ENCODE measurements at regions of chr5 and their contacts with region 1.

Region 1: DNA sequence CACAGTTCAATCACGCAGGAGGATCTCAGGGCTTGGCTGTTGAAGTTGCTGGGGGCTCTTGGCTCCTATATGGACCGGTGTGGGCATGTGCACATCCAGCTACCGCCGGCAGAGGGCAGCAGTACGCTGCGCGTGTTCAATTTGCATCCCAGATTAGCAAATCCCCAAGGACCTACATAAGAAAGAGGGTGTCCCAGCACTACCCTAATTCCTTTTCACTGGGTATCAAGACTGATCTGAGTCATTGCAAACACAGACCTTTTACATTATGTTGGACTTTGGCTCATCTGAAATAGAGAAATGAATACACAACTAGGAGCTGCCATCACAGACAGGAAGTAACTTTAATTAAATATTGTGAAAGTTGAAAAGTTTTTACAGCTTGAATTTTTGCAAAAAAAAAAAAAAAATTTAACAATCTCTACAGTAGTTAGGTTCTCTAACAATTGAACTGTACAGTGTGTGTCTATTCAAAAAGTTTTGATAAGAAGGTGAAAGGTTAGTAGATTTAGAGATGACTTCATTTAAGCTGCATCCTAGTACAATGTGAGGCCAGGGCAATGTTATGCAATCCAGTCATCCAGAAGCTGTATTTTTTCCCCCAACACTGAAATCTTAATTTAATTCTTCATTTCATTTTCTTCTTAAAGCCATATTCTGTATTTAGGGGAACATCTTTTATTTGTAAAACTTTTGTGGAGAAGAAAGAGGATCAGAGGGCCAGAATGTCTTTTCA is 404.0 kb downstream of the EBF1 start:
- H3K4me3 ChIP-seq: no peak overlapping the region
- H3K27ac ChIP-seq: no peak overlapping the region
- H3K4me1 ChIP-seq: peaks cover 14% of the 10 kb centered on the region
- CTCF ChIP-seq: peak; percentile 76

Region 2: DNA sequence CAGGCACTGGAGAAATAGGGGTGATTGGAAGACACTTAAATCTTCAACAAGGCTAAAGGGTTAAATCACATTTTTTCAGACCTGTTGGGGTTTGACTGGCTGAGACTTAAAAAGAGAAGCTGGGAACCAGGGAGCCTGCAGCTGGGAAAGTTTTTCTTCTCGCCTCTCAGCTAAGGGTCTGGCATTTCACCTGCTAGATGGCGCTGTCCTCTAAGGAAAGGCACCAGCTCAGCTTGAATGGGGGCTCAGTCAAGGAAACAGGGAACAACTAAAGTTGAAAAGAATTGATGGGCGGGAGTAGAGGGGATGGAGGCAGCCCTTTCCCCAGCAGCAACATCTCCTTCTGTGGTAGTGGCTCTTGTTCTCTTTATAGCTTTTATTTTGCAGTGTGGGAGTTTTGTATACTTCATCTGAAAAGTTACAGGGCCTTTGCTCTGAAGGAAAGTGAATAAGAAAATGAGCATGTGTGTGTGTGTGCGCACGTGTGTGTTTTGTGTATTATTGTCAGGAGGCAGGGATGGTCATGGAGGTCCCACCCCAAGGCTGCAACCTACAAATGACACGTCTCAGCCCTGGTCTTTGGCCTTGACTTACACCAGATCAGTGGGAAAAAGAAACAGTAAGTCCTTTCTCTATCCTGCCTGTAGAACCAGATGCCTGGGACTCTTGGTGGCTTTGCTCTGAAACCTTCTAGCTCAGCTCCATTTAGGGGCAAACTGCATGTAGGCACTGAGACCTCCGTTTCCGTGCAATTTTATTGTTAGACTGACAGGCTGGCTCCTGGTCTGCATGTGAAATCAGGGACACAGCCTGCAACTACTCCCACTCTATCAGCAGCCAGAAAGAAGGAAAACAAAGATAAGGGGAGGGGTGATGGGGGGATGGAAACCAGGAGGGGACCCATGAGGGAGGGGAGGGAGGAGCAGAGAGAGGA is 520.6 kb before region 1 on chr5:
- CTCF ChIA-PET with region 1: interaction called, 11 read pairs
- POLR2A ChIA-PET with region 1: no interaction called
- H3K4me3 ChIP-seq: no peak overlapping the region
- H3K27ac ChIP-seq: peak overlapping the region; percentile 83; the same call in 1 of the 2 replicates
- H3K4me1 ChIP-seq: peaks cover 15% of the 10 kb centered on the region
- CTCF ChIP-seq: peak; percentile 80; the same call in 1 of the 2 replicates

Region 3: GRCh38 chr5:158682631-158683030 is 13.1 kb before region 1 on chr5:
- CTCF ChIA-PET with region 1: interaction called, 18 read pairs
- POLR2A ChIA-PET with region 1: no interaction called
- H3K4me3 ChIP-seq: no peak overlapping the region
- H3K27ac ChIP-seq: no peak overlapping the region
- H3K4me1 ChIP-seq: no peaks in the 10 kb centered on the region
- CTCF ChIP-seq: no peak

Region 4: GRCh38 chr5:158709279-158709678 is 13.5 kb after region 1 on chr5:
- CTCF ChIA-PET with region 1: interaction called, 24 read pairs
- POLR2A ChIA-PET with region 1: interaction called, 4 read pairs
- H3K4me3 ChIP-seq: no peak overlapping the region
- H3K27ac ChIP-seq: no peak overlapping the region
- H3K4me1 ChIP-seq: no peaks in the 10 kb centered on the region
- CTCF ChIP-seq: no peak

Region 5: GRCh38 chr5:158770506-158770905 is 74.7 kb after region 1 on chr5:
- CTCF ChIA-PET with region 1: interaction called, 18 read pairs
- POLR2A ChIA-PET with region 1: no interaction called
- H3K4me3 ChIP-seq: no peak overlapping the region
- H3K27ac ChIP-seq: no peak overlapping the region
- H3K4me1 ChIP-seq: no peaks in the 10 kb centered on the region
- CTCF ChIP-seq: peak; percentile 32; the same call in 1 of the 2 replicates

Region 6: GRCh38 chr5:159133041-159133741 is 437.4 kb after region 1 on chr5:
- CTCF ChIA-PET with region 1: interaction called, 18 read pairs
- POLR2A ChIA-PET with region 1: no interaction called
- H3K4me3 ChIP-seq: no peak overlapping the region
- H3K27ac ChIP-seq: no peak overlapping the region; the same call in 1 of the 2 replicates
- H3K4me1 ChIP-seq: peaks cover 11% of the 10 kb centered on the region
- CTCF ChIP-seq: peak; percentile 58; the same call in 1 of the 2 replicates

Measured in HEK293 (cell line).